GM23248 (cell line): ENCODE measurements at regions of chr21 and their contacts with region 1.

Region 1: DNA sequence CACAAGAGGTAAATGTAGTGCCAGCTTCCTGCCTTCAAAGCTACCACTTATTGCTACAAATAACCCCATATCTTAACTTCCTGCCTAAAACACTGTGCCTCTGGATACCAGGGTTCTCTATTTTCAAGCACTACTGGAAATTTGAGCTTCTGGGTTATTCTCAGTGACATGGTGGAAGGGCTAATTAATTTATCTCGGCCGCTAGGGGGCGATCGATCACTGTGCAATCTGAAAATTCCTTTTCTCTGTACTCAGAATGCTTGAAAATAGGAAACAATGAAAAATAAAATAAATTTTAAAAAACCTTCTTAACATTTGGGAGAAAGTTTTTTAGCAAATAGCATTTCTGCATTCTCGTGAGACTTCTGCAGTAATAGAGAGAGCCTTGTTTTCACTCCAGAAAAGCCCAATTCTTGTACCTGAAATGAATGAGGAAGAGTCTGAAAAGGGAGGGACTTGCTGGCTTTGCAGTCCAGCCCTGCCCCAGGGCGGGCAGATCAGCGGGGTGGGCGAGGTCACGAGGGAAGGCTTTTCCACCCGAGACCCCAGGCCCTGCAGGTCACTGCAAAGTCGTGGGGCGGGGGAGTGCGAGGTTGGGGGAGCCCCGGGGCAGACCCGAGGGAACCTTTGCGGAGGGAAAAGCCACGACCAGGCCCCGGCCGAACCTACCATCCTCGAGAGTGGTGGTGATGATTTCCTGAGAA is 276.7 kb downstream of the PCP4 start:
- DNase-seq: peak; percentile 61
- H3K4me3 ChIP-seq: no peak overlapping the region
- H3K27ac ChIP-seq: no peak overlapping the region
- H3K4me1 ChIP-seq: no peaks in the 10 kb centered on the region
- H3K27me3 ChIP-seq: no peaks in the 10 kb centered on the region

Region 2: DNA sequence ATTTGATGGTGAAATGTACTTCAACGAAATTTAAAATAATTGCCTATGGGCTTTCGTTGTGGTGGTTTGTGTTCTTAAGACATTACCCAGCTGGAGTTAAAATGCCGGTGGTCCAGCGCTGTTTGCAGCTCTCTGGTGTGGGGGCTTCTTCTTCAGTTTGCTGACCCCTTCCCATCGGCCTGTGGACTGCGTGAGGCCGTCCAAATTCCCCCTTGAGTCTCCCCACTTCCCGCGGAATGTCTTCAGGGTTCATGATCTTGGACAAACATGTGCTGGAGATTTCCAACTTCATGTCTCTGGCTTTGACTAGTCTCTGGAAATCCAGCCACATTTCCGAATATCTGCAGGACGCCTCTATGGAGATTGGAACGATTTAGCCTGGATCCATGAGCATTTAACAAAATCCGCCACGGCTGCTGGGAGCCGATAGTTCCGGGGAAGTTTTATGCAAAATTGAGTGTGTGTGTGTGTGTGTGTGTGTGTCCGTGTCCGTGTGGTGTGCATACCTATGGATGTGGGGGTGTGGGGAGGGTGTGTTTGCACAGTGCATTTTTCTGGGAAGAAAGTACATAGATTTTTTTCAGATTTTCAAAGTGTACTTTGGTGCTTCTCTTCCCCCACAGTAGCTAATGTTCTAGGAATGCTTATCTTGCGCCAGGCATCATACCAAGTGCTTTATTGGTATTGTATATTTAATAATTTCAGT is 159.5 kb before region 1 on chr21:
- in situ Hi-C with region 1: no loop called
- DNase-seq: no peak
- H3K4me3 ChIP-seq: no peak overlapping the region
- H3K27ac ChIP-seq: no peak overlapping the region
- H3K4me1 ChIP-seq: no peaks in the 10 kb centered on the region
- H3K27me3 ChIP-seq: no peaks in the 10 kb centered on the region

Region 3: DNA sequence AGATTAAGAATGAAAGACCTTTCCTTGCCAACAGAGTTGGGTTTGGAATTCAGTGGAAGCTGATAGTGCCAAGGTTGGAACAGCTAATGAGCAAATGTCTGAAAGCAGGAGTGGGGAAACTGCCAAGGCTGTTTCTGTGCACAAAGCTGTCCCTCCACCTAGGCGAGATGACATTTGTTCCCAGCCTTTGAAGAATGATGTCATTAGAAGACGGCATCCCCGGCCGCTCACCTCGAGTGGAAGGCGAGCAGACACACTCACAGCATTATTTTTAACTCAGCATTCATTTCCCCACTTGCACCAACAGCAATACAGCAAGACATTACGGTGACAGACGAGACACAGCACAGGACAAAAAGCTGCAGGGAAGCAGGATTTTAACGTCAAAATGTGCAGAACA is 187.2 kb after region 1 on chr21:
- in situ Hi-C with region 1: no loop called
- DNase-seq: no peak
- H3K4me3 ChIP-seq: no peak overlapping the region
- H3K27ac ChIP-seq: no peak overlapping the region
- H3K4me1 ChIP-seq: no peaks in the 10 kb centered on the region
- H3K27me3 ChIP-seq: no peaks in the 10 kb centered on the region

Region 4: DNA sequence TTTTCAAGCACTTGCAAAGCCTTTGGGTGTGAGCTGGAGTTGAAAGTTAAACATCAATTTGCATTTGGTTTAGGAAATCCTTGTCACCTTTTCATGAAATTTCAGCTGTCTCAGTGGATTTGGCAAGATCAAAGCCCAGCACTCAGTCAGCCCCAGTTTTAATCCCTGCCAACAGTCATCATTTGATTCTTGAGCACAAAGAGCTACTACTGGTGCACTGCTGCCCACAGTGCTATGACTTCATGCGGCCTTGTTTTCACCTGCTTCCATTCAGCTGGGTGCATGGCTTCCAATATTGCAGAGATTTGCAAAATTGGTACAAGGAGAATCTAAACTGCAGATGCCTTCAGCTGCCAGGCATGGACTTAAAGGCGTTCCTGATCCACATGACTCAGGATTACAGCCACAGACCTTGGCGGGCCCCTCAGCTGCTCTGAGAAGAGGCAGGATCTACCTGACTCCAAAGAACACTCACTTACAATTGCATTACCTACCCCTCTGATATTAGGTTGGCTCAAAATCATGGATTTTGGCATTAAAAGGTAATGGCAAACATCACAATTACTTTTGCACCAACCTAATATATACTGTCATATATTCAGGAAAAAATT is 443.9 kb after region 1 on chr21:
- in situ Hi-C with region 1: no loop called
- DNase-seq: no peak
- H3K4me3 ChIP-seq: no peak overlapping the region
- H3K27ac ChIP-seq: no peak overlapping the region
- H3K4me1 ChIP-seq: no peaks in the 10 kb centered on the region
- H3K27me3 ChIP-seq: no peaks in the 10 kb centered on the region

Region 5: GRCh38 chr21:41068967-41069642 is 925.1 kb after region 1 on chr21:
- in situ Hi-C with region 1: loop called (anchors 25 kb)
- DNase-seq: peak; percentile 78
- H3K4me3 ChIP-seq: peak overlapping the region; percentile 21; the same call in 1 of the 2 replicates
- H3K27ac ChIP-seq: no peak overlapping the region
- H3K4me1 ChIP-seq: no peaks in the 10 kb centered on the region
- H3K27me3 ChIP-seq: peaks cover 10% of the 10 kb centered on the region; the same call in 1 of the 2 replicates